ENCODE measurements at regions of chr2 and their contacts with region 1.

Region 1: DNA sequence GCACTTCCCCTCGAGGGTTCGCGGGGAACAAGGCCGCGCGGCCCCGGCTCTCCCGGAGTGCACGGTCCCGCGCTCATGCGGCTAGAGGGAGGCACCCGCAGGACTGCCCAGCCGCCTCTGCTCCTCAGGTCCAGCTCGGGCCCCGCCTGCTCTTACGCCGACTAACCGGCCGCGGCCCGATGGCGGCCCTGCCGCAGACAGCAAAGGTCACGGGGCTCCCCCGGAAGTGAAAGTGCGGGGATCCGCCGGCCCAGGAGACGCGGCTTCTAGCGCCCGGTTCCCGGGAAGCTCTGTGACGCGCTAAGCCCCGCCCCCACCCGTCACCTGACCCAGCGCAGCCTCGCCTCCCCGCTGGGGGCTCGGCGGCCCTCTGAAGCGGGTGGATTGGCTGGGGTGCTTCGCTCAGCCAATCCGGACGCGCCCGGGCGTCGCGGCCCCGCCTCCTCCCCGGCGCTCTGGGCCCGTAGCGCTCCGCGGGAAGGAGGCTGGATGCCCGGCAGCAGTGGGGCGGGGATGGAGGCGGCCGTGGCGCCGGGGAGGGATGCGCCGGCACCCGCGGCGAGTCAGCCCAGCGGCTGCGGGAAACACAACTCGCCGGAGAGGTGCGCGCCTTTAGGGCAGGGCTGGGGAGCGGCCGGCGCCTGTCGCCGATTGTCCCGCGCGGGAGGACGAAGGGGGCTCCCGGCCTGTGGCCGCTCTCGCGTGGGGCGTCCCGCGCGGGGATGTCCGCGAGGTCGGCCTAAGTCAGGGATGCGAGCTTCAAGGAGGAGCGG is at the start of gene SCLY:
- DNase-seq: peak; percentile 93
- H3K4me3 Mint-ChIP-seq: peak within 1 kb of the TSS; percentile 90
- H3K27ac Mint-ChIP-seq: peak within 1 kb of the TSS; percentile 91
- H3K4me1 Mint-ChIP-seq: peaks cover 62% of the 10 kb centered on the region
- H3K27me3 Mint-ChIP-seq: peaks cover 7% of the 10 kb centered on the region
- total RNA-seq, gene SCLY: 109 and 119 TPM in 2 replicates

Region 2: GRCh38 chr2:237691908-237692600 is 368.7 kb before region 1 on chr2:
- intact Hi-C with region 1: loop called (anchors 5 kb)
- DNase-seq: peak; percentile 91
- H3K4me3 Mint-ChIP-seq: peak overlapping the region; percentile 99
- H3K27ac Mint-ChIP-seq: peak overlapping the region; percentile 98
- H3K4me1 Mint-ChIP-seq: peaks cover 67% of the 10 kb centered on the region
- H3K27me3 Mint-ChIP-seq: no peaks in the 10 kb centered on the region

Region 3: DNA sequence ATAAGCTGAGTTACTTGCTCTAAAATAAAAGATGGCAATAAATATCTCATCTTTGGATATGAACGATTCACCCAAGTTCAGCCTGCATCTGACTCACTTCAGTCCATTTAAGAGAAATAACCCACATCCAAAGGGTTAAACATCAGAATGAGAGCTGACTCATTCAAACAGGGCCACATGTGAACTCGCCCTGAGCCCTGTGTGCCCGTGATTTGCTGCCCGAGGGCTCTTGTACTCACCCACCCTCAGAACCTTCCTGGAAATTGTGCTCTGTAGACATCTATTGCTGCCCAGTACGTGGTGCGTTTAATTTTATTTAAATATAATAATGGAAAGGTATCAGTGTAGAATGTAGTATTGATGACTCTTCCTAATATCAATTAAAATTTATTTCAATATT is 329.1 kb before region 1 on chr2:
- intact Hi-C with region 1: no loop called
- DNase-seq: no peak
- H3K4me3 Mint-ChIP-seq: peak overlapping the region; percentile 40
- H3K27ac Mint-ChIP-seq: peak overlapping the region; percentile 85
- H3K4me1 Mint-ChIP-seq: peaks cover 46% of the 10 kb centered on the region
- H3K27me3 Mint-ChIP-seq: no peaks in the 10 kb centered on the region

Region 4: DNA sequence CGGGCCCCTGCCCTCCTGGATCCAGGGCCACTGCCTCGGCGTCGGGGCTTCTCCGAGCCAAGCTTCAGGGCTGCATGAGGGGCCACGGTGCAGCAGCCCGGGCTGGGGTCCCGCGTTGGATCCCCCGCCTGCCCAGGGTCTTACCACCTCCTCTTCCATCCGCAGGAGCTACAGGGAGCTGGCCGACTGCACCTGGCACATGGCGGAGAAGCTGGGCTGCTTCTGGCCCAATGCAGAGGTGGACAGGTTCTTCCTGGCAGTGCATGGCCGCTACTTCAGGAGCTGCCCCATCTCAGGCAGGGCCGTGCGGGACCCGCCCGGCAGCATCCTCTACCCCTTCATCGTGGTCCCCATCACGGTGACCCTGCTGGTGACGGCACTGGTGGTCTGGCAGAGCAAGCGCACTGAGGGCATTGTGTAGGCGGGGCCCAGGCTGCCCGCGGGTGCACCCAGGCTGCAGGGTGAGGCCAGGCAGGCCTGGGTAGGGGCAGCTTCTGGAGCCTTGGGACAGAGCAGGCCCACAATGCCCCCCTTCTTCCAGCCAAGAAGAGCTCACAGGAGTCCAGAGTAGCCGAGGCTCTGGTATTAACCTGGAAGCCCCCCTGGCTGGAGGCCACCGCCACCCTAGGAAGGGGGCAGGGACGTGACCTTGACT is 149.2 kb before region 1 on chr2:
- intact Hi-C with region 1: no loop called
- DNase-seq: no peak
- H3K4me3 Mint-ChIP-seq: no peak overlapping the region
- H3K27ac Mint-ChIP-seq: no peak overlapping the region
- H3K4me1 Mint-ChIP-seq: peaks cover 16% of the 10 kb centered on the region
- H3K27me3 Mint-ChIP-seq: peaks cover 4% of the 10 kb centered on the region

Region 5: DNA sequence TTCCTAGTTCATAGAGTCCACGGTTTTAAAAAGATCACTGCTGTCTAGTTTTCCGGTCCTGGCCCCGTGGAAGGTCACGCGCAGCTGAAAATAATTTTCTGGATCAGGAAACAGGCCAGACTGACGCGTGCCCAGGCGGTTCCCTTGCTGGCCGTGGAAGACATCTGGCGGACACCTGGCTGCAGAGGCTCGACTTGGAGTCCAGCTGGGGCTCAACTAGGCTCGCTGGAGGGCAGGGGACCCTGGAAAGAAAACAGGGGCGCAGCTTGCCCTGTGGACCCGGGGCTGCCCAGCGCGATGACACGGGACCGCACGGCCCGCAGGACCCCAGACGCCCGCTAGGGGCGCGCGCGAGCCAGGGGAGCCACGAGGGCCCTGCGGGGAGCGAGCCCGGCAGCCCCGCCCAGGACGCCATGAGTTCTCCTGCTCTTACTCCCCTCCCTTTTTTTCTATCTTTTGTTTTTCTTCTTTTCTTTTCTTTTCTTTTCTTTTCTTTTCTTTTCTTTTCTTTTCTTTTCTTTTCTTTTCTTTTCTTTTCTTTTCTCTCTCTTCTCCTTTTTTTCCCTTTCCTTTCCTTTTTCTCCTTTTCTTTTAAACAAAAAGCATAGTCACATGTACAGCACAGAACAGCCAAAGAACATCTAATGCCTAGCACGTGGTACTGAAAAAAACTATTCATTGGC is 137.1 kb before region 1 on chr2:
- intact Hi-C with region 1: loop called (anchors 1 kb)
- DNase-seq: peak; percentile 74
- H3K4me3 Mint-ChIP-seq: peak overlapping the region; percentile 70
- H3K27ac Mint-ChIP-seq: peak overlapping the region; percentile 74
- H3K4me1 Mint-ChIP-seq: peaks cover 38% of the 10 kb centered on the region
- H3K27me3 Mint-ChIP-seq: peaks cover 4% of the 10 kb centered on the region

Region 6: DNA sequence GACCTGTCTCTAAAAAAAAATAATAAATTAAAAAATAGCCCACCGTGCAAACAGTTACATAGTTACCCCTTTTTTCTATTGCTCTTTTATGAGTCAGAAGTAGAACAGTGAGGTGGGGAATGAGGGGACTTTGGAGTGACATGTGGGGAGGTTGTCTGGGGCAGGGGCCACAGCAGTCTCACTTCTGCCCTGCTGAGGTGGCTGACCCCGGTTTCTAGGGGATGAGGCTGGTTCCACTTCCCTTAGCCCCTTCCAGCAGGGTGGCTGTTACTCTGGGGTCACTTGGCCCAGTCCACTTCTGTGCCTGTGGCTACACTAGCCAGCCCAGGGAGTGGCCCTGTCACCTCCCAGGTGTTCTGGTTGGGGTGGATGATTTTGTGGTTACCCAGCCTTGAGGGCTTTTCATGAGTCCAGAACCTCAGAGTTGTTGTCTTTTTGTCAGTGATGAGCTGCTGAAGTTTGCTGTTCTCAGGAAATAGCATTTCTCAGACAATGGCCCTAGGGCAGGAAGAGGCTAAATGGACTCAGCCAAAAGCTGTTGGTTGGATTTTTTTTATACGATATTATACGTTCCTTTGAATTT is 27.9 kb before region 1 on chr2:
- intact Hi-C with region 1: no loop called
- DNase-seq: no peak
- H3K4me3 Mint-ChIP-seq: no peak overlapping the region
- H3K27ac Mint-ChIP-seq: peak overlapping the region; percentile 7
- H3K4me1 Mint-ChIP-seq: peaks cover 9% of the 10 kb centered on the region
- H3K27me3 Mint-ChIP-seq: no peaks in the 10 kb centered on the region

Region 7: GRCh38 chr2:238203094-238203972 is 142.6 kb after region 1 on chr2 and contains the start of gene ILKAP:
- intact Hi-C with region 1: loop called (anchors 1 kb)
- DNase-seq: peak; percentile 88
- H3K4me3 Mint-ChIP-seq: peak within 1 kb of the TSS; percentile 89
- H3K27ac Mint-ChIP-seq: peak within 1 kb of the TSS; percentile 89
- H3K4me1 Mint-ChIP-seq: peaks cover 45% of the 10 kb centered on the region
- H3K27me3 Mint-ChIP-seq: no peaks in the 10 kb centered on the region
- total RNA-seq, gene ILKAP: 77.3 and 79.9 TPM in 2 replicates

Region 8: GRCh38 chr2:238288650-238289573 is 228.2 kb after region 1 on chr2:
- intact Hi-C with region 1: loop called (anchors 1 kb)
- DNase-seq: peak; percentile 97
- H3K4me3 Mint-ChIP-seq: peak overlapping the region; percentile 91
- H3K27ac Mint-ChIP-seq: peak overlapping the region; percentile 97
- H3K4me1 Mint-ChIP-seq: peaks cover 38% of the 10 kb centered on the region
- H3K27me3 Mint-ChIP-seq: peaks cover 4% of the 10 kb centered on the region